ENCODE measurements at regions of chr6 and their contacts with region 1.

Region 1: DNA sequence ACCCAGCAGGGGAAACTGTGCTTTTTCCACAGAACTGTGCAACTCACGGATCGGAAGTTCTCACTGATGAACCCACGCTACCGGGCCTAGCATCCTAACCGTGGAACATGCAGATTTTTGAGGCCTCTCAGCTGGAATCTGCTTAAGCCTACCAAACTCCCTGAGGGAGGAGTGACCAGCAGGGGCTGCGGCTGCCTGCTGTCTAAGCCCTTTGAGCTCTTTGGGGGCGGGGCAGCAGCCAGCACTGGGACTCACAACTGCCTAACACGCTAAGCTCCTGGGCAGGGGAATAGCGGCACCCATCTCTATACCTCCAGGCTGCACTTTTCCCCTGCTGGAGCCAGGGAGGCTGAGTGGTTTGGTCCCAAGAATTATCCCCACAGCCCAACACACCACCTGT is 20.4 kb upstream of the METTL24 start:
- DNase-seq: no peak
- H3K4me3 ChIP-seq: no peak overlapping the region
- H3K27ac ChIP-seq: no peak overlapping the region
- H3K4me1 ChIP-seq: no peaks in the 10 kb centered on the region
- H3K27me3 ChIP-seq: no peaks in the 10 kb centered on the region
- CTCF ChIP-seq: no peak
- EP300 ChIP-seq: no peak
- POLR2A ChIP-seq: no peak

Region 2: DNA sequence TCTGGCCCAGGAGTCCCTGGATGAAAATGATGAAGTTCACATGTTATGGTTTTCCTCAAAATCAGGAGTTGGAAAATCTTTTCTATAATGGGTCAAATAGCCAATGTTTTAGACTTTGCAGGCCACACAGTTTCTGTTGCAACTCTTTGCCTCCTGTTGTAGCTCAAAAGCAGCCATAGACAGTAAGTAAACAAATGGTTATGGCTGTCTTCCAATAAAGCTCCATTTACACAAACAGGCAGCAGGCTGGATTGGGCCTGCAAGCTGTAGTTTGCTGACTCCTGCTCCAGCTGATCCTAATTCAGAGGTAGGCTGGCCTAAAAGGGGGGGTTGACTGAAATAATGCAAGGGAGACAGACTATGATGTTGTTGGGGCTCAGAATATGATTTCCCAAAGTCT is 53.4 kb before region 1 on chr6:
- in situ Hi-C with region 1: no loop called
- intact Hi-C with region 1: no loop called
- DNase-seq: peak; percentile 21
- H3K4me3 ChIP-seq: no peak overlapping the region
- H3K27ac ChIP-seq: peak overlapping the region; percentile 71 to 84 (median 78)
- H3K4me1 ChIP-seq: peaks cover 28 to 78% (median 46%) of the 10 kb centered on the region in 4 donors
- H3K27me3 ChIP-seq: no peaks in the 10 kb centered on the region
- CTCF ChIP-seq: no peak
- EP300 ChIP-seq: no peak
- POLR2A ChIP-seq: no peak

Region 3: DNA sequence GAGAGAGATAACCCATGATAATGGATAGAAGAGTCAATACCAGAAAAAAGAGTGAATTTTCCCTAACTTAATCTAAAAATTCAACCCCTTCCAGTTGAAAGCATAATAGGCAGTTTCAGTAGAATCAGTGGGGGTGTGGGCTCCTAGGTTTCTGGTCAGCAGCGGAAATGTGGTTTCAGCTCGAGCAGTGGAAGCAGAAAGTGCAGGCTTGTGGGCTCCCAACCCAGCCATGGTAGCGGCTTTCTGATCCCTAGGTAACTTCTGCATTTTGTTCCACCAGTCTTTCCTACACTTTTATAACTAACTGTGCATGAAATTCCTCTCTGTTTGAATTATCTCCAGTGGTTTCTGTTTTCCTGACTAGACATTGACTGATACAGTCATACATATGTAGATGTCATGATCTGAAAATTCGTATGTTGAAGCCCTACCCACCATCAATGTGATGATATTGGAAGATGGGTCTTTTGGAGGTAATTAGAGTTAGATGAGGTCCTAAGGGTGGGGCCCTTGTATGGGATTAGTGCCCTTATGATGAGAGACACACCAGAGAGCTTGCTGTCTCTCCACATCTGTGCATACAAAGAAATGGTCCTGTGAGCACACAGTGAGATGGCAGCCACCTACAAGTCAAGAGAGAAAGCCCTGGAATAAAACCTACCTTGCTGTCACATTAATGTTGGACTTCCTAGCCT is 43.3 kb after region 1 on chr6:
- in situ Hi-C with region 1: no loop called
- intact Hi-C with region 1: loop called (anchors 1 kb)
- DNase-seq: no peak
- H3K4me3 ChIP-seq: no peak overlapping the region
- H3K27ac ChIP-seq: no peak overlapping the region
- H3K4me1 ChIP-seq: peaks cover 0 to 17% (median 5%) of the 10 kb centered on the region in 4 donors
- H3K27me3 ChIP-seq: no peaks in the 10 kb centered on the region
- CTCF ChIP-seq: no peak
- EP300 ChIP-seq: no peak
- POLR2A ChIP-seq: no peak

Region 4: GRCh38 chr6:110484310-110484709 is 105.8 kb after region 1 on chr6:
- in situ Hi-C with region 1: no loop called
- intact Hi-C with region 1: no loop called
- DNase-seq: no peak
- H3K4me3 ChIP-seq: no peak overlapping the region
- H3K27ac ChIP-seq: no peak overlapping the region
- H3K4me1 ChIP-seq: no peaks in the 10 kb centered on the region
- H3K27me3 ChIP-seq: no peaks in the 10 kb centered on the region
- CTCF ChIP-seq: no peak
- EP300 ChIP-seq: no peak
- POLR2A ChIP-seq: no peak